ENCODE measurements at regions of chr14 and their contacts with region 1.

Region 1: DNA sequence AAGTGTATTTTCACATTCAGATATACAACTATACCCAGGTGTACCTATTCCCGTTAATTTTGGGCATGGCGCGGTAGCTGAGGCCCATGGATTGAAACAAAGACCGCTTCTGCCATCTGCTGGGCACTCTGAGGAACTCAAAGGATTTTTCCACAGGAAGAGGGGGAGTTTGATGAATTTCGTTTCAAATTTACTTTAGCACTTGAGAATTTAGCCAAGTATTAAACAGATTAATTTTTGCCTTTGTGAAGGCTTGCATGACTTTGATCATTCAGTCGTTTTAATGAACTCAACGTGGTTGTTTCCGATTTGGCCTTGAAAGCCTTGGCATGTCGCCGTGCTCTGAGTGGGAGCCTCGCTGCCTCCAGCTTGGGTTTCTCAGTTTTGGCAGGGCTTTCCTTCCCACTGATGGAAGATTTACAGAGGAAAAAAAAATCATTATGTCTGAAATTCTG is 153.2 kb upstream of the DDHD1 start:
- H3K4me3 ChIP-seq: peak overlapping the region; percentile 36
- H3K27ac ChIP-seq: no peak overlapping the region
- H3K4me1 ChIP-seq: no peaks in the 10 kb centered on the region
- CTCF ChIP-seq: peak; percentile 35; the same call in 1 of the 2 replicates

Region 2: GRCh38 chr14:53295985-53296582 is 10.2 kb before region 1 on chr14:
- CTCF ChIA-PET with region 1: interaction called, 40 read pairs
- POLR2A ChIA-PET with region 1: no interaction called
- H3K4me3 ChIP-seq: no peak overlapping the region
- H3K27ac ChIP-seq: no peak overlapping the region
- H3K4me1 ChIP-seq: no peaks in the 10 kb centered on the region
- CTCF ChIP-seq: no peak

Region 3: GRCh38 chr14:53325176-53325806 is 19.0 kb after region 1 on chr14:
- CTCF ChIA-PET with region 1: interaction called, 12 read pairs
- POLR2A ChIA-PET with region 1: no interaction called
- H3K4me3 ChIP-seq: no peak overlapping the region
- H3K27ac ChIP-seq: no peak overlapping the region
- H3K4me1 ChIP-seq: no peaks in the 10 kb centered on the region
- CTCF ChIP-seq: no peak

Measured in HEK293 (cell line).